ENCODE measurements at regions of chr12 and their contacts with region 1.

Region 1: GRCh38 chr12:108816652-108817335 is 40.6 kb downstream of the SSH1 start:
- DNase-seq: peak in 4 of 7 donors; percentile 53 to 63 (median 56)
- H3K4me3 ChIP-seq: no peak overlapping the region
- H3K27ac ChIP-seq: peak overlapping the region in 2 of 5 donors; percentile 20 to 55
- H3K4me1 ChIP-seq: peaks cover 7 to 27% of the 10 kb centered on the region in 2 donors
- H3K27me3 ChIP-seq: no peaks in the 10 kb centered on the region
- CTCF ChIP-seq: no peak
- POLR2A ChIP-seq: no peak

Region 2: GRCh38 chr12:108570743-108571608 is 245.8 kb before region 1 on chr12:
- intact Hi-C with region 1: loop called in 1 of 2 experiments (anchors 10 kb)
- DNase-seq: peak in 3 of 7 donors; percentile 2 to 46 (median 15)
- H3K4me3 ChIP-seq: no peak overlapping the region
- H3K27ac ChIP-seq: no peak overlapping the region
- H3K4me1 ChIP-seq: peaks cover 6 to 8% of the 10 kb centered on the region in 2 donors
- H3K27me3 ChIP-seq: no peaks in the 10 kb centered on the region
- CTCF ChIP-seq: peak in 4 of 6 experiments; percentile 26 to 36 (median 28)
- POLR2A ChIP-seq: no peak

Region 3: DNA sequence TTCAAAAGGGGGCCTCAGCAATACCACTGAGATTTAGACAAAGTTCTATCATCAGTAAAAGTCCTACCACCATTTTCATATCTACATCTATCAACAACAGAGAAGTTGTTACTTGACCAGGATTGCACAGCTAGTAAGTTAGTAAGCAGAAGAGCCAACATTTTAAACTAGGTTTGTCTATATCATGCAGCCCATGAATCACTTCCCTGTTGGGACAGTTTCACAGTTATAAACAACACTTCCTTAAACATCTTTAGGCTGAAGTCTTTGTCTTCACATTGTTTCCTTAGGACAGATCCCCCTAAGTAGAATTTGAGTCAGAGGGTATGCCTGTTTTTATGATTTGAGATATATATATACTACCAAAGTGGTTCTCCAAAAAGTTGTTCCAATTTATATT is 131.6 kb after region 1 on chr12:
- intact Hi-C with region 1: loop called in 1 of 2 experiments (anchors 10 kb)
- DNase-seq: no peak
- H3K4me3 ChIP-seq: no peak overlapping the region
- H3K27ac ChIP-seq: no peak overlapping the region
- H3K4me1 ChIP-seq: peaks cover 6 to 7% of the 10 kb centered on the region in 2 donors
- H3K27me3 ChIP-seq: no peaks in the 10 kb centered on the region
- CTCF ChIP-seq: no peak
- POLR2A ChIP-seq: no peak

Measured in adrenal gland (tissue), 19 donors.